ENCODE measurements at regions of chr6 and their contacts with region 1.

Region 1: GRCh38 chr6:158445426-158446085 is 114.3 kb upstream of the TMEM181 start:
- DNase-seq: no peak
- ATAC-seq: no peak
- H3K4me3 ChIP-seq: no peak overlapping the region
- H3K27ac ChIP-seq: no peak overlapping the region
- H3K4me1 ChIP-seq: no peaks in the 10 kb centered on the region
- H3K27me3 ChIP-seq: no peaks in the 10 kb centered on the region
- CTCF ChIP-seq: no peak
- POLR2A ChIP-seq: no peak
- RAD21 ChIP-seq: no peak

Region 2: DNA sequence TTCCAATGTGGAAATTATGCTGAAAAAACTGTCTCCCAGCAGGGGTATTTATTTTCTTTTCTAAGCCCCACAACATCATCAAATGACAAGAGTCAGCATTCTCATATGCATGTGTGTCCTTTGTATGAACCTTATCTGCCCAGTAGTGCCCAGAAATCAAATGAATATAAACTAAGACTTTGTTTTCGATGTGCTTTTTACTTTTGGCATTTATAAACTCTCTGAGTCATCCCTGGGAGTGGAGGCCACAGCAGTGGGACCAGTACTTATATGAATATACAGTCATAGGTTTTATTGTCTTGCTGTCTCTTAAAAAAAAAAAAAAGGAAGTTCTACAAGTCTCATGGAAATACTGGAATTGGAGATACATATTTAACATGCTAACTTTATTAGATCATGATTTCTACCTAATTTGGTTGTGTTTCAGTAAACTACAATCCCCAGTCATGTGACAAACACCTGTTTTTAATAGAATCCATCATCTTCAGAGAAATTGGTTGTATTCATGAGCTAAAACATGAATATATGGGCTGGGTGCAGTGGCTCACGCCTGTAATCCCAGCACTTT is 15.1 kb after region 1 on chr6:
- CTCF ChIA-PET with region 1: interaction called, 4 read pairs
- POLR2A ChIA-PET with region 1: no interaction called
- dilution Hi-C with region 1: no loop called
- in situ Hi-C with region 1: no loop called
- intact Hi-C with region 1: loop called (anchors 2 kb)
- DNase-seq: peak; percentile 86
- ATAC-seq: peak; percentile 81
- H3K4me3 ChIP-seq: no peak overlapping the region
- H3K27ac ChIP-seq: no peak overlapping the region
- H3K4me1 ChIP-seq: peaks cover 11% of the 10 kb centered on the region
- H3K27me3 ChIP-seq: no peaks in the 10 kb centered on the region
- CTCF ChIP-seq: no peak
- POLR2A ChIP-seq: no peak
- RAD21 ChIP-seq: no peak